ENCODE measurements at regions of chr10 and their contacts with region 1.

Region 1: DNA sequence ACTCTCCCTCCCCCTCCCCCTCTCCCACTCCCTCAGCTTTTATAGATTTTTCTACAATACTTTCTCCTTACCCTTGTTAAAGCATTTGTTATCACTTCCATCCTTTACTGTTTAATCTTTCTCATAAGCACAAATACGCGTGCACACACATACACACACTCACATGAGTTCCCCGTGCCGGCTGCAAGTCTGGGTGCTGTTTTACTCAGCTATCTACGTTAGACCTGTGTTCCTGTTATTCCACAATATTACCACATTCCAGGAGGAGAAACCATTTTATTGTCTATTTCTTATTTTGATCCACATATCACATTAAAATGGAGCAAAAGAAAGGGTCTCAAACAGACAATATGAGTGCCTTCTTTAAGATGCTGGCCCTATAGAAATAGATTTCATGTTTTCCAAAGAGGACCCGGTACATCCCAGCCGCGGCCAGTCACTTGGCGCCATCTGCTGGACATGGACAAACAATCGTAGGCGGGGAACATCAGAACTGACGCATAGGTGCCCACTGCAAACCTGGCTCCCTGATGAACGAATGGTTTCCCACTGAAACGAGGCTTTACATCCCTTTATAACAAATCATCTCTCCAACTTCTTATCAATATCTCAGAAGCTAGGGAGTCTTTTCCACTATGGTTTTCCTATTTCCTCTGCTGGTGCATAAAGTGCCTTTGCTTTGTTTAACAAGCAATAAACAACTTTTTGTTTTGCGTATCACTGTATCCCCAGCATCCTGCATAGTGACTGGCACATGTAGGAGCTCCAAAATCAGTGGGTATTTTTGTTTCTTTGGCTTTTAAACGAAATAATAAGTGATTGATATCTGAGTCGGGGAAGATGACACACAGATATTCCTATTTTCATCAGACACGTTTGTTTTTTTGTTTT is 25.2 kb upstream of the OPTN start:
- H3K4me3 ChIP-seq: no peak overlapping the region
- H3K27ac ChIP-seq: no peak overlapping the region
- H3K4me1 ChIP-seq: no peaks in the 10 kb centered on the region
- CTCF ChIP-seq: peak; percentile 68; the same call in 1 of the 2 replicates

Region 2: GRCh38 chr10:12214763-12215218 is 860.0 kb before region 1 on chr10:
- CTCF ChIA-PET with region 1: interaction called, 10 read pairs
- POLR2A ChIA-PET with region 1: no interaction called
- H3K4me3 ChIP-seq: no peak overlapping the region
- H3K27ac ChIP-seq: no peak overlapping the region
- H3K4me1 ChIP-seq: 0 out of 2 replicates have a peak, but pooled peaks cover 7% of the 10 kb centered on the region
- CTCF ChIP-seq: no peak

Region 3: DNA sequence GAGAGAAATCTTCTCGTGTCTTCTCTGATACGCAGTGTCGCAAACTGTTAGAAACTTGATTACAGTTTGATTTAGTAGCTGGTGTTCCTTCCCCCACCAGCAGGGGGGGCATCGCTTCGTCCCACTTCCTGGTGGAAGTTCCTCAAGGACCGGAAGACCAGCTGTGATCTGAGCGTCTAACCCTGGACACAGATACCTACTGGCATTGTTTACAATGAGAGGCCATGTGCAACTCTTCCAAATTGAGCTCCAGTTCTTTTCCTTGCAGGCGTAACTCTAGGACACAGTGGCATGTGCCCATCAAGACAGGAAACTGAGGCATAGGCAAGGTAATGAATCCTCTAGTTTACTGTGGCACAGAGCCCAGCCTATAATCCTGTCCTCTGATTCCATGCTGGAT is 292.3 kb before region 1 on chr10:
- CTCF ChIA-PET with region 1: interaction called, 13 read pairs
- POLR2A ChIA-PET with region 1: no interaction called
- H3K4me3 ChIP-seq: no peak overlapping the region
- H3K27ac ChIP-seq: no peak overlapping the region
- H3K4me1 ChIP-seq: no peaks in the 10 kb centered on the region
- CTCF ChIP-seq: peak; percentile 40; the same call in 1 of the 2 replicates

Region 4: GRCh38 chr10:12852687-12853086 is 222.1 kb before region 1 on chr10:
- CTCF ChIA-PET with region 1: no interaction called
- POLR2A ChIA-PET with region 1: no interaction called
- H3K4me3 ChIP-seq: no peak overlapping the region
- H3K27ac ChIP-seq: no peak overlapping the region
- H3K4me1 ChIP-seq: no peaks in the 10 kb centered on the region
- CTCF ChIP-seq: no peak

Region 5: GRCh38 chr10:13056456-13057077 is 18.2 kb before region 1 on chr10:
- CTCF ChIA-PET with region 1: interaction called, 33 read pairs
- POLR2A ChIA-PET with region 1: no interaction called
- H3K4me3 ChIP-seq: no peak overlapping the region
- H3K27ac ChIP-seq: no peak overlapping the region
- H3K4me1 ChIP-seq: no peaks in the 10 kb centered on the region
- CTCF ChIP-seq: no peak

Region 6: DNA sequence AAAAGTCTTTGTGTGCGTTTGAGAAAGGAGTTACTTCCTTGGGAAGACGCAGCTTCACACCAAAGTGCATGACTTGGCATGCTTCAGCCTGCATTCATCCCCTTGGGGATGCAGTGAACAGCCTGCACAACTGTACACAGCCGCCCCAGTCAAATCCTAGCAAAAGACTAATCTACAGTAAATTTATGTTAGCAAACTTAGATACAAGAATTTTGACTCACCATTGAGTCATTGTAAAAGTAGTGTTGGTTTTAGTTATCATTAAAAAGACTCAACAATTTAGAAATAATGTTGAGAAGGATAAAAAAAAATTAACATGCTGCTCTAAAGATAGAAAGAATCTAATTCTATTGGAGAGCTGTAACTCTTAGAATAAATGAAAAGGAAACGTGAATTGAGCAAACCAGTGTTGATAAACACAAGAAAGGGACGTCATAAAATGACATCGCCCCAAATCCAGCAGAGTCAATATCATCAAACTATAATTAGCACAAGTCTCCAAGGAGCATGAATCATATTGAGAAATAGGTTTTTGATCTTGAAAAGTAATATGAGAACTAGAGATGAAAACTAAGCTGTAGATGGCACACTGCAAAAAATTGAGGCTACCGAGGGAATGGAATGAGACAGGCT is 13.3 kb after region 1 on chr10:
- CTCF ChIA-PET with region 1: interaction called, 12 read pairs
- POLR2A ChIA-PET with region 1: interaction called, 4 read pairs
- H3K4me3 ChIP-seq: no peak overlapping the region
- H3K27ac ChIP-seq: no peak overlapping the region
- H3K4me1 ChIP-seq: no peaks in the 10 kb centered on the region
- CTCF ChIP-seq: no peak

Region 7: DNA sequence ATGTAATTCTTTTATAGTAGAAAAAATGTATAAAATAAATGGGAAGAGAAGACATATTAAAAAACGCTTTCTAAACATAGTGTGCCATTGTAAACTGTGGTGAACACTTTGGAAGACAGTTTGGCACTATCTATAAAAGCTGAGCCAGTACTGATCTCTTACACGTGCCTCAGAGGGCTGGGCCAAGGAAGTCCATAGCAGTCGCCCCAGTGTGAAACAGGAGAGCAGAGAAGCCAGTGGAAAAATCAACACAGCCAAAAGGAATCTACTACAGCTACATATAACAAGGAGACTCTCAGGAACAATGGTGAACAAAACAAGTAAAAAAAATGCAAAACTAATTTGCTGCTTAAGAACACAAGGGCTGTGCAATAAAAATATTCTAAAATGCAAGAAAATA is 252.7 kb after region 1 on chr10:
- CTCF ChIA-PET with region 1: no interaction called
- POLR2A ChIA-PET with region 1: no interaction called
- H3K4me3 ChIP-seq: no peak overlapping the region
- H3K27ac ChIP-seq: no peak overlapping the region
- H3K4me1 ChIP-seq: no peaks in the 10 kb centered on the region
- CTCF ChIP-seq: no peak